Left cardiac atrium (tissue), 4 donors: ENCODE measurements at regions of chr18 and their contacts with region 1.

Region 1: DNA sequence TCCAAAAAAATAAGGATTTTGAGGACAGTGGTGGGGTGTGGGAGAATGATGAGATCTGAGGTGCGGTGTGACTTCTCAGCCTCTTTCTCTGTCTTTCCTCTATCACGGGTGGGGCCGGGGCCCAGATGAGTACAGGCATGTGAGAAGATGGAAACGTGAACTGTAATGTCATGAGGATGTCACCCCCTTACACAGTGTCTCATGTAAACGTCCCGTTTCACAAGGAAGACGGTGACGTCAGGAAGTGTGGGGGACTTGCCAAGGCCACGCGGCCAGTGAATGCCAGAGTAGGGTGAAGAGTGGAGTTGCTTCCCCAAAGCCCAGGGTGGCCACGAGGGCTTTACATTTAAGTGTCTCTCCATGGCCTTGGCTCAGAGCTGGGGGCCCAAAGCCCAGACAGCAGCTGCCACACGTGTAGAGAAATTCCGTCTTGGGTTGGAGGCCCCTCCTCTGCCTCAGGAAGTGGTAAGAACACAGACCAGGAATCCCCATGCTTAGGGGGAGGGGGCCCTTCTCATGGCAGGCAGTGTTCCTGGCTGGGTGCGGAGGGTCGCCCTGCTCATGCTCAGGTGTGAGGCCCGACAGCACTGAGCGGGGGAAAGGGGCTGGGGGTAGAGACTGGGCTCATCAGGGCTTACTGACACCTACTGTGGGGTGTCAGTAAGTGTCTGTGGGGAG is 80.9 kb upstream of the SMAD7 start:
- DNase-seq: no peak
- ATAC-seq: no peak

Region 2: GRCh38 chr18:47870605-47871004 is 1161.0 kb before region 1 on chr18:
- intact Hi-C with region 1: no loop called
- DNase-seq: no peak
- ATAC-seq: no peak

Region 3: DNA sequence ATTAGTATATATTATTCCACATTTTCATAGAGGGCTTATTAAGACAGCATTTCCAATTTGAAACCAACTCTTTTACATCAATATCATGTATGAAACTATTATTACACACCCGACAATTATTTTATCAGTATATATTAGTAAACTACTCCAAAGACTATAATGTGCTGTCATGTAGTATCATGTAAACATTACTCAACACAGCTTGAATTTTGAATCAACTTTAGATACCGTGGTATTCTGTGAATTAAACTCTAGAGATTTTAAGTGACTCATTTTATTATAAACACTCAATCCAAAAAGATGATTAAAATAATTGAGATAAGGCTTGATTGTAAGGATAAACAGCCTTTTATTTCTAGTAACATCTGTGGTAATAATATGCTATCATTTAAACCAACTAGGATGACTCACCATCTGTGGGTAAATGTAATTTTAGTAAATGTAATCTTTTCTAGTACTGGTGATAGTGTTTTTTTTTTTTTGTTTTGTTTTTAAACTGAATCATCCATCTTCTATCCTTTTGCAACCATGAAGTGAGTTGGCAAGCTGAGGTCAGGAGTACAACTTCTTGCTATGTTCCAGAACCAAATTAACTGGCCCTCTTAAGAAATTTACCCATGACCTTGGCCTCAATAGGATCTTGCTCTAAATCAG is 63.5 kb after region 1 on chr18:
- intact Hi-C with region 1: loop called in 1 of 2 experiments (anchors 10 kb)
- DNase-seq: no peak
- ATAC-seq: peak in 1 of 2 donors; percentile 67